Right lobe of liver (tissue), 6 donors: ENCODE measurements at regions of chr10 and their contacts with region 1.

Region 1: DNA sequence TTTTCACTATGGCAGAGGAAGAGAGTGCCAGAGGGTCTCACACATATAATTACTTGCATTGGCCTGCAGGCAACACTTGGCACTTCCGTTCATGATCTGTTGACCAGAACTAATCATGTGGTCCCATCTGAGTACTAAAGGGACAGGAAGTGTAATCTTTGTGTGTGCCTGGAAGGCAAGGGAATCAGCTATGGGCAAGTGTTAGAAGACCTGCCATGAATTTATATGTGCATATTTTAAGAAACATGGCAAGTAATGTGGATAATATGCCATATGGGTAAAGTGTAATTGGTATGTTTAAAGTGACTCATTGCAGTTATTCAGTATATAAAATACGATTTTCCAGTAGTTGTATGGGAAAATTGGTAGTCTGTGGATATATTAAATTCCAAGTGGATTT is 46.1 kb downstream of the CCSER2 start:
- DNase-seq: no peak
- ATAC-seq: no peak
- H3K4me3 ChIP-seq: no peak overlapping the region
- H3K27ac ChIP-seq: no peak overlapping the region
- H3K4me1 ChIP-seq: peaks cover 0 to 6% (median 0%) of the 10 kb centered on the region in 4 donors
- H3K27me3 ChIP-seq: no peaks in the 10 kb centered on the region
- CTCF ChIP-seq: no peak
- POLR2A ChIP-seq: no peak

Region 2: GRCh38 chr10:84139126-84140035 is 235.1 kb before region 1 on chr10 and contains the start of gene GHITM:
- intact Hi-C with region 1: no loop called
- DNase-seq: peak; percentile 98 to 99 (median 99)
- ATAC-seq: peak; percentile 97 to 99 (median 98)
- H3K4me3 ChIP-seq: peak within 1 kb of the TSS; percentile 96 to 100 (median 97)
- H3K27ac ChIP-seq: peak within 1 kb of the TSS; percentile 94 to 98 (median 97)
- H3K4me1 ChIP-seq: peaks cover 0 to 14% (median 6%) of the 10 kb centered on the region in 4 donors
- H3K27me3 ChIP-seq: no peaks in the 10 kb centered on the region
- CTCF ChIP-seq: peak; percentile 31 to 63 (median 35)
- POLR2A ChIP-seq: peak; percentile 94
- total RNA-seq, gene GHITM: 133 to 231 (median 166) TPM

Region 3: DNA sequence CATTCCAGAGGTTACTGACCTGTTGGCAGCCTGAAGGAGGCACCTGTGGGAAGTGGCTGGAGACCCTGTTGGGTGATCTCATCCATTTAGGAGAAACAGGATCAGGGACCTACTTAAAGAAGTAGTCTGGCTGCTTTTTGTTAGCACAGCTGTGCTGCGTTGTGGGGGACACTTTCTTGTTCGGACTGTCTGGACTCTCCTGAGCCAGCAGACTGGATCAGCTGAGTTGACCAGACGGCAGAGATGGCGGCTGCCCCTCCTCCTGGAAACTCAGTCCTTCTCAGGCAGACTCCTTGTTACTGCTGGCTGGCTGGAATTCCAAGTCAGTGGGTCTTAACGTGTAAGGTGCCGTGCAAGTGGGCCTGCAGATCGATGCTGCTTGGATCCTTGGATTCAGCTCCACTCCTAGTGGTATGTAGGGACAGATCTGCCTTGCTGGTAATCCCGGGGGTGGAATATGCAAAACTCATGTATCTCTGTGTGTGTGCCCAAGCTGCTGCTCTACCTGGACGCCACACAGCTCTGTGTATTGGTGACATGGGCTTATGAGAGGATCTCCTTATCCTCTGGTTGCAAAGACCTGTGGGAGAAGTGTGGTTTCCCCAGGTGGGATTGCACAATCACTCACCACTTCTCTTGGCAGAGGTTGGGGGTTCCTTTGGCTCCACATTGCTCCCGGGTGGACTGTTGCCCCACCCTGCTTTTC is 41.2 kb after region 1 on chr10:
- intact Hi-C with region 1: loop called in 1 of 2 experiments (anchors 5 kb)
- DNase-seq: peak; percentile 31 to 74 (median 66)
- ATAC-seq: peak; percentile 93 to 99 (median 96)
- H3K4me3 ChIP-seq: no peak overlapping the region
- H3K27ac ChIP-seq: no peak overlapping the region
- H3K4me1 ChIP-seq: peaks cover 0 to 6% (median 0%) of the 10 kb centered on the region in 4 donors
- H3K27me3 ChIP-seq: no peaks in the 10 kb centered on the region
- CTCF ChIP-seq: no peak
- POLR2A ChIP-seq: no peak

Region 4: GRCh38 chr10:84452003-84452402 is 77.5 kb after region 1 on chr10:
- intact Hi-C with region 1: no loop called
- DNase-seq: no peak
- ATAC-seq: no peak
- H3K4me3 ChIP-seq: no peak overlapping the region
- H3K27ac ChIP-seq: no peak overlapping the region
- H3K4me1 ChIP-seq: no peaks in the 10 kb centered on the region
- H3K27me3 ChIP-seq: no peaks in the 10 kb centered on the region
- CTCF ChIP-seq: no peak
- POLR2A ChIP-seq: no peak

Region 5: GRCh38 chr10:84583501-84583900 is 209.0 kb after region 1 on chr10:
- intact Hi-C with region 1: no loop called
- DNase-seq: no peak
- ATAC-seq: no peak
- H3K4me3 ChIP-seq: no peak overlapping the region
- H3K27ac ChIP-seq: no peak overlapping the region
- H3K4me1 ChIP-seq: no peaks in the 10 kb centered on the region
- H3K27me3 ChIP-seq: no peaks in the 10 kb centered on the region
- CTCF ChIP-seq: no peak
- POLR2A ChIP-seq: no peak